ENCODE measurements at regions of chr16 and their contacts with region 1.

Region 1: GRCh38 chr16:58329147-58329546 is 34.3 kb upstream of the PRSS54 start:
- DNase-seq: peak in 1 of 2 experiments; percentile 19
- H3K4me3 ChIP-seq: no peak overlapping the region
- H3K4me3 Mint-ChIP-seq: no peak overlapping the region
- H3K27ac Mint-ChIP-seq: no peak overlapping the region
- H3K4me1 ChIP-seq: no peaks in the 10 kb centered on the region
- H3K4me1 Mint-ChIP-seq: no peaks in the 10 kb centered on the region
- H3K27me3 ChIP-seq: no peaks in the 10 kb centered on the region
- H3K27me3 Mint-ChIP-seq: peaks cover 5% of the 10 kb centered on the region
- CTCF ChIP-seq: no peak

Region 2: DNA sequence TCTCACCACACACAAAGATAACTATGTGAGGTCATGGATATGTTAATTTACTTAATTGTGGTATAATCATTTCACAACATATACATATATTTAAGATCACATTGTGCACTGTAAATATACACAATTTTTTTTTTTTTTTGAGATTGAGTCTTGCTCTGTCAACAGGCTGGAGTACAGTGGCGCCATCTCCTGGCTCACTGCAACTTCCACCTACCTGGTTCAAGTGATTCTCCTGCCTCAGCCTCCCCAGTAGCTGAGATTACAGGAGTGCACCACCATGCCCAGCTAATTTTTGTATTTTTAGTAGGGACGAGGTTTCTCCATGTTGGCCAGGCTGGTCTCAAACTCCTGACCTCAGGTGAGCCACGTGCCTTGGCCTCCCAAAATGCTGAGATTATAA is 22.8 kb before region 1 on chr16:
- CTCF ChIA-PET with region 1: no interaction called
- POLR2A ChIA-PET with region 1: interaction called, 15 read pairs
- intact Hi-C with region 1: no loop called
- DNase-seq: no peak
- H3K4me3 ChIP-seq: no peak overlapping the region
- H3K4me3 Mint-ChIP-seq: no peak overlapping the region
- H3K27ac Mint-ChIP-seq: no peak overlapping the region
- H3K4me1 ChIP-seq: no peaks in the 10 kb centered on the region
- H3K4me1 Mint-ChIP-seq: no peaks in the 10 kb centered on the region
- H3K27me3 ChIP-seq: no peaks in the 10 kb centered on the region
- H3K27me3 Mint-ChIP-seq: peaks cover 2% of the 10 kb centered on the region
- CTCF ChIP-seq: peak; percentile 29

Measured in Caco-2 (cell line).